Activated T-helper 2 cell treated with anti-CD3 and anti-CD28 coated beads, Interferon-gamma antibody, Interleukin-2, Interleukin-4, amounts not matched to agents 10 μg/mL and 5 μg/mL and 100 μg/mL, durations not matched to agents 14 hours and 24 hours and 36 hours (primary cell): ENCODE measurements at regions of chr1 and their contacts with region 1.

Region 1: DNA sequence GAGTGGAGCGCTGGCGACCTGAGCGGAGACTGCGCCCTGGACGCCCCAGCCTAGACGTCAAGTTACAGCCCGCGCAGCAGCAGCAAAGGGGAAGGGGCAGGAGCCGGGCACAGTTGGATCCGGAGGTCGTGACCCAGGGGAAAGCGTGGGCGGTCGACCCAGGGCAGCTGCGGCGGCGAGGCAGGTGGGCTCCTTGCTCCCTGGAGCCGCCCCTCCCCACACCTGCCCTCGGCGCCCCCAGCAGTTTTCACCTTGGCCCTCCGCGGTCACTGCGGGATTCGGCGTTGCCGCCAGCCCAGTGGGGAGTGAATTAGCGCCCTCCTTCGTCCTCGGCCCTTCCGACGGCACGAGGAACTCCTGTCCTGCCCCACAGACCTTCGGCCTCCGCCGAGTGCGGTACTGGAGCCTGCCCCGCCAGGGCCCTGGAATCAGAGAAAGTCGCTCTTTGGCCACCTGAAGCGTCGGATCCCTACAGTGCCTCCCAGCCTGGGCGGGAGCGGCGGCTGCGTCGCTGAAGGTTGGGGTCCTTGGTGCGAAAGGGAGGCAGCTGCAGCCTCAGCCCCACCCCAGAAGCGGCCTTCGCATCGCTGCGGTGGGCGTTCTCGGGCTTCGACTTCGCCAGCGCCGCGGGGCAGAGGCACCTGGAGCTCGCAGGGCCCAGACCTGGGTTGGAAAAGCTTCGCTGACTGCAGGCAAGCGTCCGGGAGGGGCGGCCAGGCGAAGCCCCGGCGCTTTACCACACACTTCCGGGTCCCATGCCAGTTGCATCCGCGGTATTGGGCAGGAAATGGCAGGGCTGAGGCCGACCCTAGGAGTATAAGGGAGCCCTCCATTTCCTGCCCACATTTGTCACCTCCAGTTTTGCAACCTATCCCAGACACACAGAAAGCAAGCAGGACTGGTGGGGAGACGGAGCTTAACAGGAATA is 4.2 kb downstream of the TFAP2E start:
- DNase-seq: peak; percentile 59
- H3K4me3 Mint-ChIP-seq: peak overlapping the region; percentile 80
- H3K27ac Mint-ChIP-seq: peak overlapping the region; percentile 53
- H3K4me1 Mint-ChIP-seq: peaks cover 19% of the 10 kb centered on the region
- H3K27me3 Mint-ChIP-seq: peaks cover 26% of the 10 kb centered on the region

Region 2: GRCh38 chr1:35641233-35641866 is 64.0 kb after region 1 on chr1 and contains the start of gene PSMB2:
- intact Hi-C with region 1: loop called (anchors 5 kb)
- DNase-seq: peak; percentile 93
- H3K4me3 Mint-ChIP-seq: peak within 1 kb of the TSS; percentile 99
- H3K27ac Mint-ChIP-seq: peak within 1 kb of the TSS; percentile 98
- H3K4me1 Mint-ChIP-seq: peaks cover 31% of the 10 kb centered on the region
- H3K27me3 Mint-ChIP-seq: peaks cover 24% of the 10 kb centered on the region
- total RNA-seq, gene PSMB2: 123 and 124 TPM in 2 replicates